CD14-positive monocyte (primary cell): ENCODE measurements at regions of chr3 and their contacts with region 1.

Region 1: GRCh38 chr3:48439820-48440589 is at the starts of genes CCDC51 and TMA7:
- DNase-seq: peak; percentile 95 to 98 (median 96)
- H3K4me3 ChIP-seq: peak within 1 kb of the TSS; percentile 81 to 86 (median 84)
- H3K4me3 Mint-ChIP-seq: peak within 1 kb of the TSS; percentile 98 to 99
- H3K27ac ChIP-seq: peak within 1 kb of the TSS; percentile 77 to 97
- H3K27ac Mint-ChIP-seq: peak within 1 kb of the TSS; percentile 93 to 99 (median 98)
- H3K4me1 ChIP-seq: peaks cover 25 to 40% of the 10 kb centered on the region in 2 donors
- H3K4me1 Mint-ChIP-seq: peaks cover 33% of the 10 kb centered on the region
- H3K27me3 ChIP-seq: no peaks in the 10 kb centered on the region
- H3K27me3 Mint-ChIP-seq: peaks cover 0 to 3% (median 0%) of the 10 kb centered on the region in 3 donors
- CTCF ChIP-seq: no peak
- polyA plus RNA-seq, gene CCDC51: 3.6 to 5.9 (median 5.4) TPM
- polyA plus RNA-seq, gene TMA7: 301 to 559 (median 478) TPM

Region 2: DNA sequence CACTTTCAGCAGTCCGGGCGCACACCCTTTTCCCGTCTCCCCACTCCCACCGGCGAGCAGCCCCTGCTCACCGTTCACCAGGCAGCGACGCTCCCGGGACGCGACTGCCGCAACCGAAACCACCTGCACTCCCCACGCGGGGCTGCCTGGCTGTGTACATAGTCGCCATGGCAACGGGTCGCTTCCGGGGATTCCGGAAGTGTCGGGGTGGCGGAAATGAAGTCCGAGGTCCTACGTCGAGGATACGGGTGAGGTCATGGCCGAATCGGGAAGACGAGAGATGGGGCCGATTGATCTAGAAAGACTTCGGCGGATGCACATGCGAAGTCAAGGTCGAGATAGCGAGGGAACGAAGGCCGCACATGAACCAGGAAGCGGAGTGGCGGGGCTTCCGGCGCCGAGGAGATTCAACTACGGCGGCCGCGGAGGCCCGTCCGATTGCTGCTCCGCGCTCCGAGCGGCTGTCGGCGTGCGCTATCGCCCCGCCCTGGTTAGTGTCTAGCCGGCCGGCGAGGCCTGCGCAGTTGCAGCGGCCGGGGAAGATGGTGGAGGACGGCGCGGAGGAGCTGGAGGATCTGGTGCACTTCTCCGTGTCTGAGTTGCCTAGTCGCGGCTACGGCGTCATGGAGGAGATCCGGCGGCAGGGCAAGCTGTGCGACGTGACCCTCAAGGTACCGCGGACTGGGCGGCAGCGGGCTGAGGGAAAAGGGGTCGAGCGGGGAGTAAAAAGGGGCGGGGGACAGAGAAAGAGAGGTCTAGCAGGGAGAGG is 1157.4 kb before region 1 on chr3 and contains the starts of genes KIF9 and KLHL18:
- intact Hi-C with region 1: loop called in 1 of 2 experiments (anchors 10 kb)
- DNase-seq: peak; percentile 96 to 98 (median 97)
- H3K4me3 ChIP-seq: peak within 1 kb of the TSS; percentile 82 to 91 (median 84)
- H3K4me3 Mint-ChIP-seq: peak within 1 kb of the TSS; percentile 95 to 99
- H3K27ac ChIP-seq: peak within 1 kb of the TSS; percentile 92 to 98
- H3K27ac Mint-ChIP-seq: peak within 1 kb of the TSS; percentile 98 to 100 (median 100)
- H3K4me1 ChIP-seq: peaks cover 48 to 56% of the 10 kb centered on the region in 2 donors
- H3K4me1 Mint-ChIP-seq: peaks cover 52% of the 10 kb centered on the region
- H3K27me3 ChIP-seq: no peaks in the 10 kb centered on the region
- H3K27me3 Mint-ChIP-seq: peaks cover 0 to 2% (median 1%) of the 10 kb centered on the region in 3 donors
- CTCF ChIP-seq: no peak
- polyA plus RNA-seq, gene KIF9: 2.4 to 5.1 (median 3.8) TPM
- polyA plus RNA-seq, gene KLHL18: 43.4 to 63.3 (median 45.3) TPM

Region 3: DNA sequence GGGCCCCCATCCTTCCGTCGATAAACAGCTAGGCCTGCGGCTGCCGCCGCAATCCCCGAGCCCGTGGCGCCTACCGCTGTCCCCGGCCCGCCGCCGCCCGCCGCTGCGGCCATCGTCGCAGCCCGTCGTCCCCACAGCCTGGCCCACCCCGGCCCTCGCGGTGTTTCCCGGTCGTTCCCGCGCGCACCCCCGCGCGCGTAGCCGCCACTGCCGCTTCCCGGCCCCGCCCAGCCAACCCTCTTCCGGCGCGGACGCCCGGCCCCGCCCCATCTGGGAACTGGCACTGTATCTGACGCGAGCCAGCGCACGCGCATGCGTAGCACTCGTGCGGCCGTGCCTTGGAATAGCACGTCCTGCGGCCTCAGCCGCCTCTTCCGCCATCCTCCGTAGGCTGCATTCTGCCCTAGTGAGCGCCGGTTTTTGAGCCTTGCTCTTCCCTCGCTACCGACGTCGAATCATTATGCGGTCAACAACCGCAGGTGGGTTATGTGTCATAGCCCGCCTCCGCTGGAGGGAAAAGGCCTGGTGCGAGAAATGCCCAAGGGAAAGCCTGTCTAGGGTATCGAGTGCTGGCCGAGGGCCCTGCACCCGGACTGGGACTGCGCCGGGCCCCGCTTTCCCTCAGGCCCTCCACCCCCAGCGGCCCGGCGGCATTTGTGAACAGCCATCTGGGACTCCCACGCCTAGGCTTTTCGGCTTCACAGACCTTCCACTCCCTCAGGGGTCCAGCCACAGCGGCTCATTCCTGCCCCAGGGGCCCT is 658.1 kb before region 1 on chr3 and contains the start of gene SMARCC1:
- intact Hi-C with region 1: loop called in 1 of 2 experiments (anchors 10 kb)
- DNase-seq: peak; percentile 97 to 98 (median 98)
- H3K4me3 ChIP-seq: peak within 1 kb of the TSS; percentile 79 to 93 (median 89)
- H3K4me3 Mint-ChIP-seq: peak within 1 kb of the TSS; percentile 93 to 98
- H3K27ac ChIP-seq: peak within 1 kb of the TSS; percentile 96
- H3K27ac Mint-ChIP-seq: peak within 1 kb of the TSS; percentile 94 to 99 (median 98)
- H3K4me1 ChIP-seq: peaks cover 25 to 31% of the 10 kb centered on the region in 2 donors
- H3K4me1 Mint-ChIP-seq: peaks cover 26% of the 10 kb centered on the region
- H3K27me3 ChIP-seq: no peaks in the 10 kb centered on the region
- H3K27me3 Mint-ChIP-seq: peaks cover 0 to 3% (median 0%) of the 10 kb centered on the region in 3 donors
- CTCF ChIP-seq: no peak
- polyA plus RNA-seq, gene SMARCC1: 8.8 to 33.5 (median 20.5) TPM

Region 4: DNA sequence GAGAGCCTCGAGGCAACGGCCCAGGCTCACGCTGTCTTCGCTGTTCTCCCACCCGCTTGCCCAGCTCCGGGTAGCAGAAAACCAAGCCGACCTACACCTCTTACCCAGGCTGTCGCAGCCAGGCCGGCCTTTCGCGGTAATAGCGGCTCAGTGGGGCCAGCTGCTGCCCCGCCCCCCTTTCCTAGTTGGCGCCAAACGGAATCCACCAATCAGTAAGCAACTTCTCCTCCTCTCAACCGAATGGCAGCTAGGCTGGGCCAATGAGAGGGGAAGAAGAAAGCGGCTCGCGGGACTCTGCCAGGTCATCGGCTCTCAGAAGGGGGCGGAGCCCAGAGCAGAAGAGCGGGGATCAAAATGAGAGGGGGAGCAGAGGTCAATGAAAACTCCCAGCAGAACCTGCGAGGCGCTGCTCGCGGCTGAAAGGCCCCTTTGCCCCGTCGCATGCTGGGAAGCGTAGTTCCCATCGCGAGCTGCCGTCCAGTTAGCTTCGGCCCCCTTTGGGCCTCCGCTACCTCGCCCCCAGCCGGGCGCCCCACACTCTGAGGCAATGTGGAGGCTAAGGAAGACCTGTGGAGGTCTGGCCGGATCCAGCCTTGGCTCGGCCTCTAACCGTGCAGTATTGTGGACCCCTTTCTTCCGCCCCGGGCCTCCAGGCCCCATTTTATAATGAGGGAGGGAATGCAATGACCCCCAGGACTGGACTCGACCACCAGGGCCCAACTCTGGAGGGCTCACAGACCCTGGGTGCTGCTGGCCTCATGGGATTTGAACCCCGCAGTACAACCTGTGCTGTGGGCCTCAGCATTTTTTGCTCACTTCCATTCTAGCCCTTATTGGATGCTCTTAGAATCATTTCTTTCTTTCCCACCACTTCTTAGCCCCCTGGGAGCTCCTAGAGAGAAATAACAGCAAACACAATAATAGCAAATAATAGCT is 251.5 kb before region 1 on chr3 and contains the start of gene CDC25A:
- intact Hi-C with region 1: loop called (anchors 10 kb)
- DNase-seq: peak; percentile 95 to 96 (median 95)
- H3K4me3 ChIP-seq: peak within 1 kb of the TSS; percentile 76 to 91 (median 79)
- H3K4me3 Mint-ChIP-seq: peak within 1 kb of the TSS; percentile 88
- H3K27ac ChIP-seq: peak within 1 kb of the TSS in 1 of 2 donors; percentile 34
- H3K27ac Mint-ChIP-seq: peak within 1 kb of the TSS in 5 of 7 donors; percentile 26 to 77 (median 48)
- H3K4me1 ChIP-seq: peaks cover 16 to 21% of the 10 kb centered on the region in 2 donors
- H3K4me1 Mint-ChIP-seq: peaks cover 15% of the 10 kb centered on the region
- H3K27me3 ChIP-seq: no peaks in the 10 kb centered on the region
- H3K27me3 Mint-ChIP-seq: peaks cover 0 to 2% (median 2%) of the 10 kb centered on the region in 3 donors
- CTCF ChIP-seq: no peak
- polyA plus RNA-seq, gene CDC25A: 0.07 to 0.39 TPM in 2 of 3 donors, not detected in the other

Region 5: DNA sequence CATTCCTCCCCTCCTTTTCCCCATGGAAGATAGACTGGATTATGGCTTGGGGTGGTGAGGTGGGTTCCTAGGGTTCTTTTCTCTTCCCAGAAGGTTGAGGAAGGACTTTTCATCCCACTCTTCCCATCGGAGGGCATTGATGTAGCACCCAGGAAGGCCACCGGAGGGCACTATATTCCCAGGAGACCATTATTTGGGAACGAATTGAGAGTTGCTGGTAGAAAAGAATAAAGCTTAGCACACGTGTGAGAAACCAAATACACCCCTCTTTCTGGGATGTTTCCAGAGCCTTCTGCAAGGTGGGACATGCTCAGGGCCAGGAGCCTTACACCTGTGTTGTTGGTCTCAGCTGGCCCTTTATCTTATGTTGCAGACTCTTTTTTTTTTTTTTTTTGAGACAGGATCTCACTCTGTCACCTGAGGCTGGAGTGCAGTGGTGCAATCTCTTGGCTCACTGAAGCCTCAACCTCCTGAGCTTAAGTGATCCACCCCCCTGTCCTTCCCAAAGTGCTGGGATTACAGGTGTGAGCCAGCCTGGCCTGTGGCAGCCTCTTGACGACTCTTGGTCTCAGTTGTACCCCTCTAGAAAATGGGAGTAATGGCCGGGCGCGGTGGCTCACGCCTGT is 245.4 kb before region 1 on chr3:
- intact Hi-C with region 1: loop called (anchors 10 kb)
- DNase-seq: peak; percentile 21 to 61 (median 50)
- H3K4me3 ChIP-seq: no peak overlapping the region
- H3K4me3 Mint-ChIP-seq: no peak overlapping the region
- H3K27ac ChIP-seq: no peak overlapping the region
- H3K27ac Mint-ChIP-seq: no peak overlapping the region
- H3K4me1 ChIP-seq: peaks cover 18 to 21% of the 10 kb centered on the region in 2 donors
- H3K4me1 Mint-ChIP-seq: peaks cover 21% of the 10 kb centered on the region
- H3K27me3 ChIP-seq: no peaks in the 10 kb centered on the region
- H3K27me3 Mint-ChIP-seq: peaks cover 2 to 7% (median 6%) of the 10 kb centered on the region in 3 donors
- CTCF ChIP-seq: peak; percentile 86

Region 6: GRCh38 chr3:48273594-48274211 is 166.3 kb before region 1 on chr3:
- intact Hi-C with region 1: loop called (anchors 1 to 2 kb)
- DNase-seq: peak; percentile 45 to 67 (median 62)
- H3K4me3 ChIP-seq: no peak overlapping the region
- H3K4me3 Mint-ChIP-seq: no peak overlapping the region
- H3K27ac ChIP-seq: no peak overlapping the region
- H3K27ac Mint-ChIP-seq: no peak overlapping the region
- H3K4me1 ChIP-seq: no peaks in the 10 kb centered on the region
- H3K4me1 Mint-ChIP-seq: peaks cover 11% of the 10 kb centered on the region
- H3K27me3 ChIP-seq: no peaks in the 10 kb centered on the region
- H3K27me3 Mint-ChIP-seq: peaks cover 0 to 4% (median 1%) of the 10 kb centered on the region in 3 donors
- CTCF ChIP-seq: peak; percentile 82

Region 7: GRCh38 chr3:48338635-48339034 is 101.4 kb before region 1 on chr3:
- intact Hi-C with region 1: no loop called
- DNase-seq: no peak
- H3K4me3 ChIP-seq: no peak overlapping the region
- H3K4me3 Mint-ChIP-seq: no peak overlapping the region
- H3K27ac ChIP-seq: no peak overlapping the region
- H3K27ac Mint-ChIP-seq: no peak overlapping the region
- H3K4me1 ChIP-seq: peaks cover 26 to 37% of the 10 kb centered on the region in 2 donors
- H3K4me1 Mint-ChIP-seq: peaks cover 57% of the 10 kb centered on the region
- H3K27me3 ChIP-seq: no peaks in the 10 kb centered on the region
- H3K27me3 Mint-ChIP-seq: no peaks in the 10 kb centered on the region
- CTCF ChIP-seq: no peak

Region 8: GRCh38 chr3:48400824-48401433 is 39.1 kb before region 1 on chr3:
- intact Hi-C with region 1: loop called (anchors 1 to 5 kb)
- DNase-seq: peak; percentile 53 to 73 (median 65)
- H3K4me3 ChIP-seq: no peak overlapping the region
- H3K4me3 Mint-ChIP-seq: no peak overlapping the region
- H3K27ac ChIP-seq: no peak overlapping the region
- H3K27ac Mint-ChIP-seq: no peak overlapping the region
- H3K4me1 ChIP-seq: peaks cover 11 to 14% of the 10 kb centered on the region in 2 donors
- H3K4me1 Mint-ChIP-seq: peaks cover 18% of the 10 kb centered on the region
- H3K27me3 ChIP-seq: no peaks in the 10 kb centered on the region
- H3K27me3 Mint-ChIP-seq: peaks cover 0 to 4% (median 0%) of the 10 kb centered on the region in 3 donors
- CTCF ChIP-seq: peak; percentile 82